ENCODE measurements at regions of chr12 and their contacts with region 1.

Region 1: DNA sequence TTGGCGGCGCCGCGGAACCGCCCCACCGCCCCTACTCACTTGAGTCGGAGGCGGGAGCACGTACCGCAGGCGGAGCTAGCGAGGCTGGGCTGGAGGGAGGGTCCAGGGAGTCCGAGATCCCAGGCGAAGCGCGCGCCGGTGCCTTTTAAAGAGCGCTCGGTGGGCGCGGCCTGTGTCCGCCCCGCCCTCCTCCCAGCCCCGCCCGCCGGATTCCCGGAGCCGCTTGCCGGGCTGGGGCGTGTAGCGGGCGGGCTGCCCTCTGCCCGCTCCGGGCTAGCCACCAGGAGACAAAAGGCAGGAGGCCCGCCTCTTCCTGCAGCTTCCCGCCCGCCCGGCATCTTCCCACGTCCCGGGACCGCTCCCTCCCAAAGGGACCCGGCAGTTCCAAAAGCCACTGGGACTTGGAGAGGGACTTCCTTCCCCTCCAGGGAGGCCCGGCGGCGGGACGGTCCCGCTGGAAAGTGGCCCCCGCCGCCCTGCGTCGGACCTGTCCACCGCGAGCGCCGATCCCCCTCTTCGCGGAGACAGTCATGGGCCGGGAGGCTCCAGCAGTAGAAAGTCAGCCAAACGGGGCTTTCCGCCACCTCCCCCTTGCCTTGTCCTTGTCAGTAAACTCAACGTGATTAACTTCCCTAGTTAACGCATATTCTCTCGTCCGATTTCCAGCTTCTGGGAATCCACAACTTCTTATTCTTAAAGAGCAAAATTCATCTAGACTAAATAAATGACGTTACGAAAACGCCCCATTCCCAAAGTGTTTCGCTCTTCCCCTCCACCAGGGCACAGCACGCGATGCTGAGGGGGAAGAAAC is at the start of gene CSRP2:
- DNase-seq: no peak
- H3K4me3 ChIP-seq: peak within 1 kb of the TSS; percentile 80
- CTCF ChIP-seq: peak; percentile 20

Region 2: DNA sequence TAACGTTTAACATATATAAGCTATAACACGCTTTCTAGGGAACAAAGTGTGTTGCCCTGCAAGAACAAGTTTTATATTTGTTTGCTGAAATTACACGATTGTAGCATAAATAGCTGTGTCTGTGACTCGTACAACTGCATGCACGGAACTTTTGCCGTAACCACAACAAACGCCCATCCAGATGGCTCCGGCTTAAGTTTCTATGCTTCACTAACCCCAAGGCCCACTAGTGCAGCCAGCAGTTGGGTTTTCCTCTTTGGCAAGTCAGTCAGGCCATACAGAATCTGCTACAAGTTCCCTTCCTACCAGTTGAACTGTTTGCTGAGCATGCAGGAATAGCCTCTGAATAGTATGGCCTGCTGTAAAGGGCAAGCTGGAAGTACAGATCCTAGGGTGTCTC is 12.4 kb before region 1 on chr12:
- CTCF ChIA-PET with region 1: interaction called, 6 read pairs
- POLR2A ChIA-PET with region 1: interaction called, 24 read pairs
- DNase-seq: no peak
- H3K4me3 ChIP-seq: no peak overlapping the region
- CTCF ChIP-seq: no peak

Region 3: GRCh38 chr12:76890151-76891143 is 11.3 kb after region 1 on chr12:
- CTCF ChIA-PET with region 1: interaction called, 10 read pairs
- POLR2A ChIA-PET with region 1: no interaction called
- DNase-seq: no peak
- H3K4me3 ChIP-seq: no peak overlapping the region
- CTCF ChIP-seq: no peak